ENCODE measurements at regions of chrX and their contacts with region 1.

Region 1: DNA sequence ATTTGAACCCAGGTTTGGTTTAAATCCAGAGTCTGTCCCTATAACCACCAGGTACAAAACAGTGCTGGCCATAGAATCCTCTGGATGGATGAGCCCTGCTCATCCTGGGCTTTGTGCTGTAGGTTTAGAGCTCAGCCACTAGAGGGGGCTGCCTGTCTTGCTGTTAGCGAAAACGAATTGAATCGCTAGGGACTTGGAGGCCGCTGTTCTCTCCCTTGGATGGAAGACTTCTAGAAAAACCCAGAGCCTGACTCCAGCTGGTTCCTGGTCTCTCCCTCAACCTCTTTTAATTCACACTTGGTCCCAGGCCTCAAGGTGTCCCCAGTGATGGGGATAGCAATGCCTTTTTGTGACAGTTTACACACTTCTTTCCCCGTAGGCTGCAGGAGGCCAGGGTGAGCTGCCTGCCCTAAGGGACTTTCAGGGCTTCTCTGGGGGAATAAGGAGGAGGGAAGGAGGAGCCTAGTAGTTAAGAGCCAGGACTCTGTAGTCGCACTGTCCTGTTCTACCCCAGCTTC is 8.7 kb downstream of the RIPPLY1 start:
- DNase-seq: peak; percentile 54
- ATAC-seq: peak; percentile 82 to 91

Region 2: DNA sequence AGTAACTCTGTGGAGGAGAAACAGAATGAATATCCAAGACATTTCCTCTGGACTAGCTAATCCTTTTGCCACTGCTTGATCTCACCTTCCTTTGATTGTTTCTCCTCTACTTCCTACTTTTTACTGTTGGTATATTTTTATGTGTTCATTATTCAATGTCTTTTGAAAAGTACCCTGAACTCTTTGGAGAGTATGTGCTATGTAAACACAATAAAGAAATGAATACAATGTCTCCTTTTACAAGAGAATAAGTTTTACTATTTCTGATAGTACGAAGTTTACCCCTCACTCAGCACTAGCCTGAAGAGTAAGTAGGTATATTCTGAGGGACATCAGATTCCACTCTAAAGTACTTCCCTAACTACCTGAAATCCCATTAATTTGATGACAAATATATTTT is 45.6 kb after region 1 on chrX:
- intact Hi-C with region 1: loop called in 1 of 2 experiments (anchors 5 kb)
- DNase-seq: no peak
- ATAC-seq: no peak

Region 3: DNA sequence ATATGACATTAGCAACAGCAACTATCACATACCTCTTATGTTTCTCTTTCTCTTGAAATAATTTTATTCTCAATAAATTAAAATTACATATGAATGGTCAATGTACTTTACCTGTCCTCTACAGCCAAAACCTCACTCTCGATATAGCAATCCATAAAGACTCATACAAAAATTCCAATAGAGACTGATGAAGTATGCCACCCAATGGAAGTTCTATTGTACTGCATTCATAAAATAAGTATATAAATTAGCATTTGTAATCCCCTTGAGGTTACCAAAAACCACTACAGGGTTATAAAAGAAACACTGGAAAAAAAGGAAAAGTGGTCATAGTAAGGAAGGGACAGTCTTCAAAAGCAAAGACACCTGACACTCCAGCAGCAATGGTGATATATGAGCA is 58.5 kb after region 1 on chrX:
- intact Hi-C with region 1: loop called (anchors 5 to 10 kb)
- DNase-seq: no peak
- ATAC-seq: no peak

Region 4: GRCh38 chrX:107025545-107025944 is 131.1 kb after region 1 on chrX:
- intact Hi-C with region 1: no loop called
- DNase-seq: no peak
- ATAC-seq: no peak

Region 5: DNA sequence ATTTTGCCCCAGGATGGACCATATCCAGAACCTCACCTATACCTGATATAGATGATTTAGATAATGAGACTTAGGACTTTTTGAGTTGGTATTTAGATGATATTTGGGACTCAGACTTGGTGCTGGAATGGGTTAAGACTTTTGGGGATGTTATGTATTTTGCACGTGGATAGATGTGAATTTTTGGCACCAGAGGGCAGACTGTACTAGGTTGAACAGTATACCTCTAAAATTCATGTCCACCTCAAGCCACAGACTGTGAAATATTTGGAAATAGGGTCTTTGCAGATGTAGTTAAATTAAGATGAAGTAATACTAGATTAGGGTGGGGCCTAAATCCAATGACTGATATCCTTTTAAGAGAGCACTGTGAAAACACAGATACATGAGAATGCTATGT is 208.5 kb after region 1 on chrX:
- intact Hi-C with region 1: no loop called
- DNase-seq: no peak
- ATAC-seq: no peak